ENCODE measurements at regions of chr1 and their contacts with region 1.

Region 1: DNA sequence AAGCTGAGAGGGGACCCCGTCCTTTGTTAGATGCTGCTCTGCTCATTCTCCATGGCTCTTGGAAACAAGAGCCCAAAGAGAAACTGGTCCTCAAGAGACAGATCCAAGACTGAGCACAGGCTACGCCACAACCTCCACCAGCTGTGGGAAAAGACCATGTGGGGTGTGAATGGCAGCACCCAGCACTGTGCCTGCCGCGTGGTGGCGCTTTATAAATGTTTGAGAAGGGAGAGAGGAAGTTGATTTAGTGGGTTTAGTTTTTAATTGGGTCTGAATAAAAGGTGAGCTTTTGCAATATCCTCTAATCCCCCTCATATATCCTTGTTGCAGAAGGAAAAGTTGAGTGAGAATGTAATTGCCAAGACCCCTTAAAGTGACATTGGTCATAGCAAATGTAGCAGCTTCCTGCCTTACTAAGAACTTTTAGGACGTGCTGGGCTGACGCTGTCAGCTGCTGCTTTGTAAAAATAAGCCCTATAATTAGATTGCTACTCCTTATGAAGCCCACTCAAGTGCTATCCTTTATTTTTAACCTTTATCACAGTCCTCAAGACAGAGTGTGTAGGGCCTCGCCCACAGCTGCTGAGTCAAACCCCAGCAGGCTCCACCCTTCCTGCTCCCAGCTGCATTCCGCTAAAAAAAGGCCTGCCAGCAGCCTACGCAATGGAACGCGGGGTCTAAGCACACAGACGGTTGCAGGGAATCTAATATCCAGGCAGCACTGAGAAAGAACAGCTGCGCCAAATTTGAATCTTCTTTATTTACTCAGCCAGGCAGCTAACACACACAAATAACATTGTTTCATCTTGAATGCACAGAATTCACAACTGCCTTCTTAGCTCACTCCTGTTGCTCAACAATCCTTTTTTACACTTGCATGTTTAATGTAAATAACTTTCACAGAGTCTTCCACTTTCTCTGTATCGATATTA is 47.4 kb upstream of the PRDX6 start:
- DNase-seq: peak; percentile 64
- H3K4me3 ChIP-seq: peak overlapping the region in 1 of 3 experiments; percentile 8
- H3K27ac ChIP-seq: peak overlapping the region; percentile 54
- H3K4me1 ChIP-seq: peaks cover 36% of the 10 kb centered on the region
- H3K27me3 ChIP-seq: no peaks in the 10 kb centered on the region
- CTCF ChIP-seq: peak; percentile 35 to 55

Region 2: GRCh38 chr1:173476664-173477285 is 47.0 kb after region 1 on chr1:
- CTCF ChIA-PET with region 1: no interaction called
- dilution Hi-C with region 1: no loop called
- in situ Hi-C with region 1: no loop called
- intact Hi-C with region 1: loop called (anchors 1 kb)
- DNase-seq: peak; percentile 86
- H3K4me3 ChIP-seq: peak overlapping the region; percentile 77 to 94 (median 92)
- H3K27ac ChIP-seq: peak overlapping the region; percentile 40
- H3K4me1 ChIP-seq: peaks cover 47% of the 10 kb centered on the region
- H3K27me3 ChIP-seq: no peaks in the 10 kb centered on the region
- CTCF ChIP-seq: no peak

Region 3: DNA sequence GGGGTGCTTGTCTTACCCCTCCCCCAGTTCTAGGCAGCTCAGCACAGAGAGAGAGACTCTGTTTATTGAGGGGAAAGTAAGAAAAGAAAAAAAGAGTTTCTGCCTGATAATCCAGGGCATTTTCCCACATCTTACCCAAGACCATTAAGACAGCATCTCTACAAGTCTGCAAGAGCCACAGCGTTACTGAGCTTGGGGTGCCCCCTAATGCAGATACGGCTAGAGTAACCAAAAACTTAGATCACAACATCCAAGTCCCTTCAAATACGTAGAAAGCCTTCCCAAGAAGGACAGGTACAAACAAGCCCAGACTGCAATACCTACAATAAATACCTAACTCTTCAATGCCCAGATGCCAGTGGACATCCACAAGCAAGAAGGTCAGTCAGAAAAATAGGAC is 199.2 kb after region 1 on chr1:
- CTCF ChIA-PET with region 1: no interaction called
- dilution Hi-C with region 1: no loop called
- in situ Hi-C with region 1: no loop called
- intact Hi-C with region 1: loop called (anchors 10 kb)
- DNase-seq: peak; percentile 33
- H3K4me3 ChIP-seq: no peak overlapping the region
- H3K27ac ChIP-seq: no peak overlapping the region
- H3K4me1 ChIP-seq: peaks cover 4% of the 10 kb centered on the region
- H3K27me3 ChIP-seq: no peaks in the 10 kb centered on the region
- CTCF ChIP-seq: peak in 1 of 2 donors; percentile 5

Region 4: GRCh38 chr1:173733912-173734311 is 304.2 kb after region 1 on chr1:
- CTCF ChIA-PET with region 1: no interaction called
- dilution Hi-C with region 1: no loop called
- in situ Hi-C with region 1: no loop called
- intact Hi-C with region 1: loop called (anchors 5 kb)
- DNase-seq: no peak
- H3K4me3 ChIP-seq: no peak overlapping the region
- H3K27ac ChIP-seq: no peak overlapping the region
- H3K4me1 ChIP-seq: no peaks in the 10 kb centered on the region
- H3K27me3 ChIP-seq: no peaks in the 10 kb centered on the region
- CTCF ChIP-seq: no peak

Region 5: DNA sequence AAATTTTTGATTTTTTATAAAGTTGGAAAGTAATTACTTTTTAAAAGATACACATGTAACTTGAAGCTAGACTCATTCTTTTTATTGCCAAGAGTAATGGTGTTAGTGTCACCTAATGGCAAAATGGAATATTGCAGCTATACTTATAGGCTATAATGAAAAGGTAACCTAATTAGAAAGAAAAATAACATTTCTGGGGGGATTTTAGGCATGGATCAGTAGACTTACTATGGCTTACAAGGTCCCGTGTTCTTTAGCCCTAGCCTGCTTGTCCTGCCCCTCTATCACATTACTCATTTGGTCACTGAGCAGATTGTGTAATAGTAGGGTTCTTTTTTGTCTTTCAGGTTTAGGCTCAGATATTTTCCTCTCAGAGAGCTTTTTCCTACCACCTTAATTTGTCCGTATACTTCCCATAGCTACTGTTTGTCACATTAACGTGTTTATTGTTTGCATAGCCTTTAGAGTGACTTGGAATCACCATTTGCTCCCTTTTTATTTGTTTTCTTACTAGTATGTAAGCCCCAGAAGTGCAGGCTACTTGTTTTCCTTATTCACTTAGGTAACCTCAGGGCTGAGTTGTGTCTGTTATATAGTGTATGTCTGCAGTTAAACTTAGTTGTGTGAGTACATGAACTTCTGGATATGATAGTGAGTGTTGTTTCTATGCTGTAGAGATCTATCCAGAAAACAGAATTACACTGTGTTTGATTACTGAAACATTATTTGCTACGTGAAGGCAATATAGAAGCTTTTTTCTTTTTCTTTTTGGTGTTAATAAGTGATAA is 788.2 kb after region 1 on chr1:
- CTCF ChIA-PET with region 1: no interaction called
- dilution Hi-C with region 1: no loop called
- in situ Hi-C with region 1: no loop called
- intact Hi-C with region 1: loop called (anchors 2 kb)
- DNase-seq: peak; percentile 27
- H3K4me3 ChIP-seq: no peak overlapping the region
- H3K27ac ChIP-seq: no peak overlapping the region
- H3K4me1 ChIP-seq: peaks cover 15% of the 10 kb centered on the region
- H3K27me3 ChIP-seq: no peaks in the 10 kb centered on the region
- CTCF ChIP-seq: peak; percentile 72 to 86